ENCODE measurements at regions of chr12 and their contacts with region 1.

Region 1: DNA sequence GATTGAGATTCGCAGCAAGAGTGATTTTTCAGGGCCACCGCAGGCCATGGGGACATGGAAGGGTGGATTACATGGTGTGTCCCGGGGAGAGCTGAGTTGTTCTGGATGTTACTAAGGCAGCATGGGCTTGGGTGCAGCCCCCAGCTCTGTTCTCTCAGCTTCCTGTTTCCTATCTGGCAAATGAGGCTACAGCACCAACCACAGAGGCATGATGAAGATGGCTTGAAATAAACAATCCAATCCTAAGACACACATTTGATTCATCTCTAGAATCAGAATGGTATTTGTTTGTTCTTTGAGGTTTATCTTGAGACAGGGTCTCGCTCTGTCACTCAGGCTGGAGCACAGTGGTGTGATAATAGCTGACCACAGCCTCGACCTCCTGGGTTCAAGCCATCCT is 21.6 kb downstream of the GLTP start:
- DNase-seq: no peak
- ATAC-seq: no peak
- H3K4me3 Mint-ChIP-seq: no peak overlapping the region
- H3K27ac Mint-ChIP-seq: peak overlapping the region; percentile 10
- H3K4me1 Mint-ChIP-seq: peaks cover 18% of the 10 kb centered on the region
- H3K27me3 Mint-ChIP-seq: no peaks in the 10 kb centered on the region

Region 2: DNA sequence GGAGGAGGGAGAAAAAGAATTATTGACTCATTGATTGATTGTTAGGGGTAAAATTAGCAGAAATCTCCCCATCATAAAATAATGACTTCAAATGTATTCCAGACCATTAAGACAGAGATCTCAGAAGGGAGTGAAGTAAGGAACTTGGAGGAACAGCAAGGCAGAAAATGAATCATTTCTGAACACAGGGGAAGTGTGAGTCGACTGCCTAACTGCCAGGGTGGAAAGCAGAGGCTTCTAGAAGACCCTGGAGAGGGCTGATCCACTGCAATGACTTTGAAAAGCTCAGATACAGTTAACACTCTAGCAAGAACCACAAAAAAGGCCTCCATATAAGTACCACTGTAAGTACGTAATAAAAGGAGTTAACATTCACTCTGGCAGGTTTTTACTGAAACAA is 11.9 kb after region 1 on chr12:
- CTCF ChIA-PET with region 1: interaction called, 40 read pairs
- POLR2A ChIA-PET with region 1: no interaction called
- DNase-seq: no peak
- ATAC-seq: no peak
- H3K4me3 Mint-ChIP-seq: no peak overlapping the region
- H3K27ac Mint-ChIP-seq: no peak overlapping the region
- H3K4me1 Mint-ChIP-seq: peaks cover 7% of the 10 kb centered on the region
- H3K27me3 Mint-ChIP-seq: no peaks in the 10 kb centered on the region

Region 3: GRCh38 chr12:109880016-109880931 is 21.5 kb after region 1 on chr12 and contains the start of gene GLTP:
- CTCF ChIA-PET with region 1: interaction called, 21 read pairs
- POLR2A ChIA-PET with region 1: no interaction called
- DNase-seq: peak; percentile 88
- ATAC-seq: peak; percentile 98
- H3K4me3 Mint-ChIP-seq: peak within 1 kb of the TSS; percentile 86
- H3K27ac Mint-ChIP-seq: peak within 1 kb of the TSS; percentile 91
- H3K4me1 Mint-ChIP-seq: peaks cover 40% of the 10 kb centered on the region
- H3K27me3 Mint-ChIP-seq: peaks cover 20% of the 10 kb centered on the region
- total RNA-seq, gene GLTP: 19.9 to 20.9 TPM

Region 4: DNA sequence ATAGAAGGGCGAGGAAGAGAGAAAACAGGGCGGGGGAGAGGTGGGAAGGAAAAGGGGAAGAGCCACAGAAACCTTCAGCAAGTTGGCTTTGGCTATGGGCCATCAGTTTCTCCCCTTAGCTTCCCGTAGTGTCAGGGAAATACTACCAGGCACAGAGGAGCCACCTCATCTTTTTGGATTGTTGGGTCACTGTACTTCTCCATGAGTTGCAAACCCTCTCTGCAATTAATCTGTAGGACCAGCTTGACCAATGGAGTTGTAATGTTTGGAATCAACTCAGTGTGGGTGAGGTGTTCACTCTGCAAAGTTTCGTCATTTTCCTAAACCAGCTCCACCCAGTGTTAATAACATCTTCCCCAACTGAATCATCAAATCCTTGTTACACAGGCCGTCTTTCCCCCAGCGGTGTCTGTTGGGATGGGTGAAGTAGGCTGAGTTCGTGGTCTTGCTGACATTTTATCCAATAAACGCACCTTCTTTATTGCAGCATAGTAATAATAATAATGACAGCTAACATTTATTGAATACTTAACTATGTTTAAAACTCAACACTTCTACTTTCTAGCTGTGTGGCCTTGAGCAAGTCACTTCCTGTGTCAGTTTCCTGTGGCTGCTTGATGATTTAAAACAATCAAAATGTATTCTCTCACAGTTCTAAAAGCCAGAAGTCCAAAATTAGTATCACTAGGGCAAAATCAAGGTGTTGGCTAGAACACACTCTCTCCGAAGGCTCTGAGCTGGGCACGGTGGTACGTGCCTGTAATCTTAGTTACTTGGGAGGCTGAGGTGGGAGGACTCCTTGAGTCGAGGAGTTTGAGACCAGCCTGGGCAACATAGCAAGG is 29.6 kb after region 1 on chr12:
- CTCF ChIA-PET with region 1: interaction called, 12 read pairs
- POLR2A ChIA-PET with region 1: no interaction called
- DNase-seq: peak; percentile 36
- ATAC-seq: peak; percentile 68
- H3K4me3 Mint-ChIP-seq: peak overlapping the region; percentile 29
- H3K27ac Mint-ChIP-seq: peak overlapping the region; percentile 99
- H3K4me1 Mint-ChIP-seq: peaks cover 49% of the 10 kb centered on the region
- H3K27me3 Mint-ChIP-seq: peaks cover 11% of the 10 kb centered on the region

Region 5: GRCh38 chr12:109927622-109928021 is 68.9 kb after region 1 on chr12:
- CTCF ChIA-PET with region 1: interaction called, 13 read pairs
- POLR2A ChIA-PET with region 1: no interaction called
- DNase-seq: peak; percentile 56
- ATAC-seq: peak; percentile 72
- H3K4me3 Mint-ChIP-seq: no peak overlapping the region
- H3K27ac Mint-ChIP-seq: peak overlapping the region; percentile 71
- H3K4me1 Mint-ChIP-seq: no peaks in the 10 kb centered on the region
- H3K27me3 Mint-ChIP-seq: no peaks in the 10 kb centered on the region

Measured in activated CD8-positive, alpha-beta T cell treated with anti-CD3 and anti-CD28 coated beads, Interleukin-2, amount 10 ng/mL, durations not matched to agents 7 days and 5 days (primary cell).